ENCODE measurements at regions of chr16 and their contacts with region 1.

Region 1: DNA sequence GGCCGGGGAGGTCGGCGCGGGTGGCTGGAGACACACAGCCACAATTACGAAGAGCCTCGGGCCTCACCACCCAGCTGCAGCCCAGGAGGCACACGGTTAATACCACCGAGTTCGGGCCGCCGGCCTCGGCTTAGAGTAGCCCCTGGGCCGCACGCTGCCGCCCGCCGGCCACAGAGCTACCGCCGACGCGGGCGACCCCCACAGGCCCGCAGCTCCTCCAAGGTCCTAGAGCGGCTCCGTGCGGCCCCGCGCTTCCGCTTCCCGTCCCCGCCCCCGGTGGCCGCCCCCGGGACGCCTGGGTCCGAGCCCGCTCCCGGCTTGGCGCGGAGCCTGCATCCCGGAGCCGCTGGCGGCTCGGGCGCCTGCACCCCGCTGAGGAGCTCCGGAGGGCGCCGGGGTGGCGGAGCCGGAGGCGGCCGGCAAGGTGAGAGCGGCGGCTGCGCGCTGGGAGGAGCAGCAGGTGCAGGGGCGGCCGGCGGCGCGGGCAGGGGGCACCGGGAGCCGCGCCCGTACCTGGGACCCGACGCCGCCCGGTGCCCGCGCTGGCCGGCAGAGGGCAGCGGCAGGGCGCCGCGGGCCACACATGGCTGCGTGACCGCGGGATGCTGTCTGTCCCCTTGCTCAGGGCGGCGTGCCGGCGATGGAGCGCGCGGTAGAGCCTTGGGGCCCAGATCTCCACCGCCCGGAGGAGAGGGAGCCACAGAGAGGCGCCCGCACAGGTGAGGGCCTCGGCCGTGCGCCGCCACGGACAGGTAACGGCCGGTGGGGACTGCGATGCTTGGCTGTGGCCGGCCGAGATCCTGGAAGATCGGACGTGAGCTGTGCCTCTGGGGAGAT is at the start of gene ZNF48:
- DNase-seq: peak; percentile 74 to 99 (median 90)

Region 2: DNA sequence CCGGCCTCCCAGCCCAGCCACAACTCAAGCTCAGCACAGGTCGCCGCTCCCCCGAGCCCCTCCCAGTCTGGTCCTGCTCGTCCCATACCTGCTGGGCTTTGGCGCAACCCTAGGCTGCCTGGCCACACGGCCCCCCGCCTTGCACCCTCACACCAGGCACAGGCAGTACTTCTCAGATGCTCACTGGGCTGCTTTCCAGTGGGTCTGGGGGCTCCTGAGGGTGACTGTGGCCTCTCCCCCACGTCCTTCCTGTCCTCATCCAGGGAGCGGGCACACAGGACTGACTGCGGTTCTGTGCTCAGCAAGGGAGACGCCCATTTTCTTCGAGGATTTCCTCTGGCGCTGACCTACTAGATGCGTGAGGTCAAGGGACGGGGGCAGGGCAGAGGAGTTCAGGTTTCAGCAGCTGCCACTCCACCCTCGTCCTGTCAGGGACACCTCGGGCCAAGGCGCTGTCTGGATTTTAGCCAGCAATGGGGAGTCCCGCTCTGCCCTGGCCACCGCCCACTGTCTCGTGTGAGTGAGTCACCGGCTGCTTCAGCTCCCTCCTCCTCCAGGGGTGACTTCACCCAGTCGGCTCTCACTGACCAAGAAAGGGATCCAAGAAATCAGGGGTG is 1104.6 kb before region 1 on chr16:
- intact Hi-C with region 1: no loop called
- DNase-seq: peak in 9 of 10 donors; percentile 30 to 93 (median 50)

Region 3: GRCh38 chr16:30349675-30350074 is 45.7 kb before region 1 on chr16:
- intact Hi-C with region 1: loop called (anchors 5 kb)
- DNase-seq: peak in 2 of 10 donors; percentile 17 to 36

Region 4: DNA sequence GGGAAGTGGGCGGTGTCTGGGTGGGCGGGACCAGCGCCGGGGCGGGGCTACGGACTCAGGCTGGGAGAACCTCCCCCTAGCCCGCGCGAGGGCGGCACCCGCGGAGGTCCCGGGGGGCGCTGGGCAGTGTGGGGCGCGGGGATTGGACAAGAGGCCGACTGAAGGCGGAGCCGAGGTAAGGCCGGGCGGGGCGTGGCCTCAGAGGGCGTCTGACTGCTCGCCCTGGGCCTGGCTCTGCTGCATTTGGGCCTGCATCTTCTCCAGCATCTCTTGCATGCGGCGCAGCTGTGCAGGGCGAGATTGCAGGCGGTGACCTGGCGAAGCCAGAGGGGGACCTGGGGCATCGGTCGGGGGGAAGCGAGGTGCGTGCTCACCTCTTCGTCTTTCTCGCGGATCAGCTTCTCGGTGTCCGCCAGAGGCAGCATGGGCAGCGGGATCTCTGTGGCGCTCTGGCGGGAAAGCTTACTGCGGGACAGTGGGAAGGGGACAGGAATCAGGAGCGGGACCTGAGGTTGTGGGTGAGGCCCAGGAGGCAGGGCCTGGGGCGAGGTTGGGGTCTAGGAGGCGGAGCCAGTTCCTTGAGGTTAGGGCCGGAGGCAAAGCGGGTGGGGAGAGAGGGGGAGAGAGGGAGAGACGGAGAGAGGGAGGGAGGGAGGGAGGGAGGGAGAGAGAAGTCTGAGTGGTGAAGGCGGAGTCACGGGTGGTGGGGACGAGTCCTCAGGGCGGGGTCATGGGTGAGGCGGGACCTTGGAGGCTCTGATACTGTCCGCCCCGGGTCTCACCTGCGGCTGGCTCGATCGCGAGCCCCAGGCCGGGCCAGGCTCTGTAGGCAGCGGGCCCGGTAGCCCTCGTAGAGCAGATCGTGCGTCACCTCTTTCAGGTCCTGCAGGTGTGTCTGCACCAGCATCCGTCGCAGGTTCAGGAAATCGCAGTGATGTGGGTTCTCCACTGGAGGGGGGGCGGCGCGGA is 16.9 kb before region 1 on chr16:
- intact Hi-C with region 1: loop called (anchors 2 kb)
- DNase-seq: peak; percentile 99 to 100 (median 100)

Region 5: DNA sequence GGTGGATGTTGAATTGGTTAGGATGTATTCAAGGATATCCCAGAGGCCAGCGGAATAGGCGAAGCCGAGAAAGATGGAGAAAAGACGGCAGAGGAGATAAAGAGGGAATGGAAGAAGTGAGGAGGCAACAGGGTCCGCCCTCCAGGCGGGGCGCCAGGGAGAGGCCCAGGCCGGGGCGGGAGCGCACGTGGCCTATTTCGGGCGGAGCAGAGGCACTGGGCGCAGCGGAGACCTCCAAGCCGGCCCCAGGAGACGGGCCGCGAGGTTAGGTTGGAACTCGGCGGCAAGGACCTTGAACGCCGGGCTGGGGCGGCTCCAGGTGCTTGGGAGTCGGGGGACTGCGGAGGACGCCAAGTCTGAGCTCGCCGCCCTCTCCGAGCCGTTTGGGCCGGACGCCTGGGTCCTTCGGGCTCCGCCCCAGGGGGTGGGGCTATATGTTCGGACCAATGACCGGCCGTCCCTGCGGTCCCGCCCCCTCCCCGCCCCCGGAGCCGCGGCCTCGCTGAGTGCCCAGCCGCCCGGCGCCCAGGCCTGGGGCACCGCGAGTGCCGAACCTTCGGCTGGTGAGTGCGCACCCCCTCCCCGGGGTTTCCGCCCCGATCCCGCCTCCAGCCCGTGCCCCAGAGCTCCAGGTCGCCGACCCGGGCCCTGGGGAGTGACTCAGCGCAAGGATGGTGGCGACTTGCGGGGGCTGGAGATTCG is 11.9 kb after region 1 on chr16 and contains the start of gene ZNF771:
- intact Hi-C with region 1: loop called (anchors 1 kb)
- DNase-seq: peak; percentile 89 to 99 (median 94)